A549 (cell line): ENCODE measurements at regions of chr5 and their contacts with region 1.

Region 1: DNA sequence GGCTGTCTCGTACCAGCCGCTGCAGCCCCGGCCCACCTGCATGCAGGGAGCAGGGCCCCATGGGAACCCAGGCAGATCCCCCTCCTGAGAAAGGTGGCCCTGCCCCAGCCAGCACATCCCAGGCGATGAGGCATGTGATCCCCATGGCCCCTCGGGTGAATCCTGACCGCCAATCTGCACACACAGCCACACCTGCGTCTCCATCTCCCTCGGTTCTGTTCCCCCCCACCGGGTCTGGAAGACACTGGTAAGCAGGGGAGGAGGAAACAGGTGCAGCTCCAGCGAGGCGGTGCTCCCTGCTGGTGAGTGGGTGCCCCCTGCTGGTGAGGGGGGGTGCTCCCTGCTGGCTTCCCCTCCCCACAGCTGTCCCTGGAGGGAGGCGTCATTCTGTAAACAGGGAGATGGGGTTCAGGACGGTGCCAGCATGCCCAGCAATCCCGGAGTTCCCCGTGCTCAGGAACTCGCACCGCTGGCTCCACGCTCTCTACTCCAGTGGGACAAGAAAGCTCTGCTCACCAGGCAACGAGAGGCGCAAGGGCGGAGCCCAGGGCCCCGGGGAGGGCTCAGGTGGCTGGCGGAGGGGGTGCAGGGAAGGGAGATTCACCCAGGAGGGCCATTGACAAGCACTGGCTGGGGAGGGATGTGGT is 28.4 kb upstream of the SLC12A7 start:
- DNase-seq: peak; percentile 67
- ATAC-seq: peak; percentile 74 to 87
- H3K4me3 ChIP-seq: no peak overlapping the region
- H3K27ac ChIP-seq: 0 out of 6 replicates have a peak overlapping the region, but pooled peaks of 1 of the 2 experiments have one; percentile 24
- H3K4me1 ChIP-seq: peaks cover 5% of the 10 kb centered on the region; the same call in 2 of the 3 replicates
- CTCF ChIP-seq: peak; percentile 82
- EP300 ChIP-seq: no peak
- POLR2A ChIP-seq: no peak
- RAD21 ChIP-seq: peak; percentile 89 to 91

Region 2: DNA sequence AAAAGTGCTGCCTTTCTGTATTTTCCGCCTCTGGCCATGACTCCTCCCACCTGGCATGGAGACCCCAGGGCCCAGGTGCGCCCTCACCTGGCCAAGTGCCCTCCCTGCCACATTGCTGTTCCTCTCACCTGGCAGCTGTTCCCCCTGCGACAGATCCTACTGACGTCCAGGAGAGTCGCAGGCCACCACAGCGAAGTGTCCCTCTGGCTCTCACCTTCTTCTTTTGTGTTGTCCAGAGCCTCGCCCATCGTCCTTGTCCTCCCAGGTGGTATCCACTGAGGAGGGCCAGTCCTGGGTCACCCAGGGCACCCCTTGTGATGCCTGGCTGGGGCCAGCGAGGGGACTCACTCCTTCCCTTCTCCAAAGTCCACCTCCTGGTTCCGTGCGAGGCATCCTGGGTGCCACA is 129.1 kb before region 1 on chr5:
- CTCF ChIA-PET with region 1: interaction called, 11 read pairs
- POLR2A ChIA-PET with region 1: no interaction called
- DNase-seq: peak; percentile 53 to 77
- ATAC-seq: peak; percentile 22 to 56; a peak in 3 of 6 replicates
- H3K4me3 ChIP-seq: no peak overlapping the region
- H3K27ac ChIP-seq: no peak overlapping the region
- H3K4me1 ChIP-seq: peaks cover 24% of the 10 kb centered on the region
- CTCF ChIP-seq: peak; percentile 53
- EP300 ChIP-seq: no peak
- POLR2A ChIP-seq: no peak
- RAD21 ChIP-seq: peak; percentile 26 to 40; a peak in 4 of 5 replicates

Region 3: GRCh38 chr5:1118231-1118698 is 22.0 kb before region 1 on chr5:
- CTCF ChIA-PET with region 1: interaction called, 18 read pairs
- POLR2A ChIA-PET with region 1: no interaction called
- DNase-seq: no peak
- ATAC-seq: peak in 1 of 2 experiments; percentile 56; a peak in 3 of 6 replicates
- H3K4me3 ChIP-seq: no peak overlapping the region
- H3K27ac ChIP-seq: 0 out of 6 replicates have a peak overlapping the region, but pooled peaks of 1 of the 2 experiments have one; percentile 2
- H3K4me1 ChIP-seq: peaks cover 9% of the 10 kb centered on the region; the same call in 2 of the 3 replicates
- CTCF ChIP-seq: no peak
- EP300 ChIP-seq: no peak
- POLR2A ChIP-seq: no peak
- RAD21 ChIP-seq: no peak

Region 4: DNA sequence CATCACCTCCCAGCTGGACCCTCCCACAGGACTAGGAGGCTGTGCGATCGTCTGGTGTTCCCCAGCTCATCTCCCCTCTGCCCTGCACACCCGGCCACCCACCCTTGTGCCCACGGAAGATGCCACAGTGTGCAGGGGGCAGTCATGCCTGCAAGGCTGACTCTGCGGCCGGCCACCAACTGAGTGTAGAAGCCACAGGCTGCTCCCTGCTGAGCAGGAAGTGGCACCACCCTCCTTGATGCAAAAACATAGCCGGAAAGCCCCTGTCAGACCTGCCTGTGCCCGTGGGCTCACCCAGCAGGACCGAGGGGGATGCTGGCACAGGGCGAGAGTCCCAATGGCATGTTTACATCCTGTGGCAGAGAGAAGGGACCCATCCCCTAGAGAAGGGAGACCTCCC is 11.9 kb after region 1 on chr5:
- CTCF ChIA-PET with region 1: interaction called, 55 read pairs
- POLR2A ChIA-PET with region 1: no interaction called
- DNase-seq: no peak
- ATAC-seq: no peak
- H3K4me3 ChIP-seq: no peak overlapping the region
- H3K27ac ChIP-seq: no peak overlapping the region
- H3K4me1 ChIP-seq: peaks cover 8% of the 10 kb centered on the region; the same call in 1 of the 3 replicates
- CTCF ChIP-seq: no peak
- EP300 ChIP-seq: no peak
- POLR2A ChIP-seq: no peak
- RAD21 ChIP-seq: no peak

Region 5: GRCh38 chr5:1204693-1205242 is 64.5 kb after region 1 on chr5:
- CTCF ChIA-PET with region 1: no interaction called
- POLR2A ChIA-PET with region 1: no interaction called
- DNase-seq: peak; percentile 28 to 58
- ATAC-seq: peak; percentile 25 to 57; a peak in 5 of 6 replicates
- H3K4me3 ChIP-seq: no peak overlapping the region
- H3K27ac ChIP-seq: no peak overlapping the region
- H3K4me1 ChIP-seq: no peaks in the 10 kb centered on the region; the same call in 2 of the 3 replicates
- CTCF ChIP-seq: no peak
- EP300 ChIP-seq: no peak
- POLR2A ChIP-seq: no peak
- RAD21 ChIP-seq: no peak